ENCODE measurements at regions of chr16 and their contacts with region 1.

Region 1: GRCh38 chr16:1942810-1943726 is at the start of gene MSRB1:
- H3K4me3 ChIP-seq: peak within 1 kb of the TSS; percentile 67
- H3K27ac ChIP-seq: no peak within 1 kb of the TSS; the same call in 1 of the 2 replicates
- H3K4me1 ChIP-seq: no peaks in the 10 kb centered on the region
- CTCF ChIP-seq: peak; percentile 48; the same call in 1 of the 2 replicates

Region 2: DNA sequence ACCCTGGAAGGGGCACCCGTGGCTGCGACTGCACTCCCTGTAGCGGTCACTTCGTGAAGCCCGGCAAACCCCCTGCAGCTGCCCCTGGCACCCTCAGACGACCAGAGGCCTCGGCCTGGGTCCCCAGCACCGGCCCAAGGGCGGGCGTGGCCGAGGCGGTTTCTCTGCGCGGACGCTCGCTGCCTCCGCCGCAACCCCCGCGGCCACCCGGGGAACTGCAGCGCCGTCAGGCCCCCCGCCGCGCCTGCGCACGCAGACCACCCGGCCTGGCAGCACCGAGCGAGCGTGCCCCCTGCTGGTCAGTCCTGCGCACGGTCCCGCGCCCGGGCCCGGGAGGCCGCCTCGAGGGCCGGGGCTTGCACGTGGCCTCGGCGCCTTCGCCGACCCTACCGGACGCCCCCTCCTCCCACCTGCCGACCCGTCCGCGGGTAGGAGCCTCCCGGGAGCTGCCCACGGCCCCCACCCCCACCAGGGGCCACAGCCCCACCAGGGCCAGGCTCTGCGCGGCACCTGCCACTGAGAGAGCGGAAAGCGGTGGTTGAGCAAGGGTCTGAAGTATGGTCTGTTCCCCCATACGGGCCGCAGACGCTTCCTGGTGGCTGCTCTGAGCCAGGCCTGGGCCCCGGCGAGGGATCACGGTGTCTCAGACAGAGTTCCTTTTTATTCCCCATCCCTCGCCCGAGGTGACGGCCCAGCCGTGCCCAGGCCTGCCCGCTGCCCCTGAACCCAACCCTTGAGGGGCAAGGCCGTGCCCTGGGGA is 13.3 kb before region 1 on chr16:
- CTCF ChIA-PET with region 1: interaction called, 19 read pairs
- POLR2A ChIA-PET with region 1: interaction called, 5 read pairs
- H3K4me3 ChIP-seq: peak overlapping the region; percentile 44
- H3K27ac ChIP-seq: peak overlapping the region; percentile 16; the same call in 1 of the 2 replicates
- H3K4me1 ChIP-seq: no peaks in the 10 kb centered on the region
- CTCF ChIP-seq: peak; percentile 59; the same call in 1 of the 2 replicates

Region 3: GRCh38 chr16:1959269-1960049 is 16.4 kb after region 1 on chr16 and contains the start of gene NDUFB10:
- CTCF ChIA-PET with region 1: interaction called, 3 read pairs
- POLR2A ChIA-PET with region 1: interaction called, 33 read pairs
- H3K4me3 ChIP-seq: peak within 1 kb of the TSS; percentile 94
- H3K27ac ChIP-seq: peak within 1 kb of the TSS; percentile 96
- H3K4me1 ChIP-seq: no peaks in the 10 kb centered on the region; the same call in 1 of the 2 replicates
- CTCF ChIP-seq: peak; percentile 80

Region 4: GRCh38 chr16:1991948-1992703 is 49.1 kb after region 1 on chr16:
- CTCF ChIA-PET with region 1: no interaction called
- POLR2A ChIA-PET with region 1: no interaction called
- H3K4me3 ChIP-seq: no peak overlapping the region
- H3K27ac ChIP-seq: no peak overlapping the region
- H3K4me1 ChIP-seq: peaks cover 3% of the 10 kb centered on the region
- CTCF ChIP-seq: no peak

Measured in HEK293 (cell line).